Activated CD8-positive, alpha-beta T cell treated with anti-CD3 and anti-CD28 coated beads for 36 hours (primary cell): ENCODE measurements at regions of chr3 and their contacts with region 1.

Region 1: GRCh38 chr3:52231502-52232293 is 6.3 kb upstream of the TLR9 start:
- DNase-seq: peak; percentile 89
- ATAC-seq: peak; percentile 82
- H3K4me3 Mint-ChIP-seq: peak overlapping the region; percentile 8
- H3K27ac Mint-ChIP-seq: peak overlapping the region; percentile 82
- H3K4me1 Mint-ChIP-seq: peaks cover 62% of the 10 kb centered on the region
- H3K27me3 Mint-ChIP-seq: no peaks in the 10 kb centered on the region
- CTCF ChIP-seq: peak; percentile 96

Region 2: DNA sequence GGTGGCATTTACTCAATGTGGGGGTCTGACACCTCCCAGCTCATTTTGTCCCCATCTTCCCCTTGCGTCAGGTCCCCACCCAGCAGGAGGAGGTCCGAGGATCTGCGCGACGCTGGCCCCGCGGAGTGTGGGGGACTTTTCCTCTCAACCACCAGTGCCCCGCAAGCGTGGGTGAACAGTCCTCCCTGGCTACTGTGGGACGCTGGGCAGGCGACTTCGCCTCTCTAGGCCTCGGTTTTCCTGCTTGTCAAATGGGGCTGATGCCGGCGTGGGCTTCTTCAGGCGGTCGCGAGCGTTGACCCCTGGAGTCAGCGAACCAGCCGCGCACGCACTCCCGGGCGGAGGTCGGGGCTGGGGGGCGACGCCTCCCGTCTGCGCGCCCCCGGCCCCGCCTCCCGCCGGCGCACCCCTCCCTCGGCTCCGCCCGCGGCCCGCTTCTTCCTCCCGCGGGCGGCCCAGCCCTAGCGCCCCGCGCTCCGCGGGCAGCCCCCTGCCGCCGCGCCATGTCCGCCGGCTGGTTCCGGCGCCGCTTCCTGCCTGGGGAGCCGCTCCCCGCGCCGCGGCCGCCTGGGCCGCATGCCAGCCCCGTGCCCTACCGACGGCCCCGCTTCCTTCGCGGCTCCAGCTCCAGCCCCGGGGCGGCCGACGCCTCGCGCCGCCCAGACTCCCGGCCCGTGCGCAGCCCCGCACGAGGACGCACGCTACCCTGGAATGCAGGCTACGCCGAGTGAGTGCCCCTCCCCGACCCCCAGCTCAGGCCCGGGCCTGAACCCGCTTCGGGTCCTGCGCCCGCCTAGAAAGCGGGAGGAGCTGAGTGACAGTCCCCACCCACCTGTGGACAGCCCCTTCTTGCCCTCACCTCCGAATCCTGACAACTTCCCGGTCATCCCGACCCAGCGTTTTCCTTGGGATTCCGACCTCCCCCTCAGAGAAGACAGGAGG is 13.9 kb after region 1 on chr3 and contains the start of gene PPM1M:
- CTCF ChIA-PET with region 1: interaction called, 21 read pairs
- POLR2A ChIA-PET with region 1: interaction called, 107 read pairs
- intact Hi-C with region 1: no loop called
- DNase-seq: peak; percentile 67
- ATAC-seq: peak; percentile 35
- H3K4me3 Mint-ChIP-seq: peak within 1 kb of the TSS; percentile 94
- H3K27ac Mint-ChIP-seq: peak within 1 kb of the TSS; percentile 95
- H3K4me1 Mint-ChIP-seq: peaks cover 78% of the 10 kb centered on the region
- H3K27me3 Mint-ChIP-seq: no peaks in the 10 kb centered on the region
- CTCF ChIP-seq: no peak
- total RNA-seq, gene PPM1M: 94.3 to 100 TPM

Region 3: DNA sequence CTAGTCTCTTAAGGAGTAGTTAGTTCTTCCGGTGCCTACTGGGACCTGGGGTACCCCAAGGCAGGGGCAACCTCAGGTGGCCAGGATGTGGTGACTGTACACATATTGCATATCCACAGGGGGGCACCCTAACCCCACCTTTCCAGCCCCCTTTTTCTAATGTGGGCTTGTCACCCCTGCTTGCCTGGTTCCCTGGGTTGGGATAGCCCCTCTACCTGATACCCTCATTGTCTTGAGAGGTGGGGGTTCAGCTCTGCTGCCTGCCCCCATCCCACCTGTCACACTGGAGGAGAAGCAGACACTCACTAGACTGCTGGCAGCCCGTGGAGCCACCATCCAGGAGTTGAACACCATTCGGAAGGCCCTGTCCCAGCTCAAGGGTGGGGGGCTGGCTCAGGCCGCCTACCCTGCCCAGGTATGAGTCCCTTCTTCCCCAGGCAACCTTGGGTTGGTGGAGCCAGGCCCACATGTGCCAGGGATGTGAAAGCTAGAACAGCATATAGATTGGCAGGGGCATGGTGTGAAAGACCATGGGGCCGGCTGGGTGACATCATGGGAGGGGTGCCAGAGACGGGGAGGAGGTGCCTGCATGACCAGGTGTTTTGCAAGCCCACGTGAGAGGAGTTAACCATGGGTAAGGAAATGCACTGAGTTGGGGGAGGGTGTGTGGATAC is 59.9 kb after region 1 on chr3:
- CTCF ChIA-PET with region 1: interaction called, 48 read pairs
- POLR2A ChIA-PET with region 1: interaction called, 949 read pairs
- intact Hi-C with region 1: no loop called
- DNase-seq: peak; percentile 63
- ATAC-seq: peak; percentile 28
- H3K4me3 Mint-ChIP-seq: no peak overlapping the region
- H3K27ac Mint-ChIP-seq: no peak overlapping the region
- H3K4me1 Mint-ChIP-seq: peaks cover 22% of the 10 kb centered on the region
- H3K27me3 Mint-ChIP-seq: no peaks in the 10 kb centered on the region
- CTCF ChIP-seq: peak; percentile 78